Ovary (tissue), 10 donors: ENCODE measurements at regions of chr12 and their contacts with region 1.

Region 1: DNA sequence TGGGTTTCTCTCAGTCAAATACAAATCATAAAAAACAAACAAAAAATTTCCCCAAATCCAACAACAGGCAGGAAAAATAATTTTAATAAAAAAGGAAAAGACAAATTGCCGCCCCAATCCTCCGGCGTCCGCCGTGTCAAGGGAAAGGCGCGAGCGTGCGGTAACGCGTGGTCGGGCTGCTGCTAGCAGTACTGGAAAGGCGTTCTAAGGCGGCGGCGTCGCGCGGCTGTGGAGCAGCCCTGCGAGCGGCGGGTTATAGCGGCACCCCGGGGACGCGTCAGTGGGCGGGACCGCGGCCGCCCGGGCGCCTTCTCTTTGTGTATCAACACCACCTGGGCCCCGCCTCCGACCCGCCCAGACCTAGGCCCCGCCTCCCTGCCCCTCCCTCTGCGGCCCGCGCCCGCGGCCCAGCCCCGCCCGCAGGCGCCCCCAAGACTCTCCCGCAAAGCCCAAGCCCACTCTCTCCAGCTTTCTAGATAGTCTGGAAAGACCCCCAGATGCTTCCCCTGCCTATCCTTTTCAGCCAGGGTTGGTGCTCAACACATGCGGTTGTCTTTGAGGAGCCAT is at the start of gene SLC38A2:
- DNase-seq: peak; percentile 98 to 99 (median 99)
- H3K4me3 ChIP-seq: peak within 1 kb of the TSS; percentile 99
- H3K27ac ChIP-seq: peak within 1 kb of the TSS; percentile 95 to 96
- H3K4me1 ChIP-seq: peaks cover 6% of the 10 kb centered on the region
- H3K27me3 ChIP-seq: no peaks in the 10 kb centered on the region
- CTCF ChIP-seq: no peak
- EP300 ChIP-seq: no peak
- POLR2A ChIP-seq: peak; percentile 98
- total RNA-seq, gene SLC38A2: 124 to 390 (median 248) TPM

Region 2: GRCh38 chr12:45990468-45991283 is 382.0 kb before region 1 on chr12 and contains the start of gene SCAF11:
- intact Hi-C with region 1: loop called in 1 of 4 experiments (anchors 10 kb)
- DNase-seq: peak; percentile 100
- H3K4me3 ChIP-seq: peak within 1 kb of the TSS; percentile 82
- H3K27ac ChIP-seq: peak within 1 kb of the TSS; percentile 91 to 97
- H3K4me1 ChIP-seq: peaks cover 7% of the 10 kb centered on the region
- H3K27me3 ChIP-seq: no peaks in the 10 kb centered on the region
- CTCF ChIP-seq: peak; percentile 93 to 99 (median 99)
- EP300 ChIP-seq: no peak
- POLR2A ChIP-seq: peak; percentile 90
- total RNA-seq, gene SCAF11: 91.8 to 149 (median 97.7) TPM

Region 3: GRCh38 chr12:46153268-46153872 is 219.3 kb before region 1 on chr12:
- intact Hi-C with region 1: loop called in 1 of 4 experiments (anchors 10 kb)
- DNase-seq: no peak
- H3K4me3 ChIP-seq: no peak overlapping the region
- H3K27ac ChIP-seq: no peak overlapping the region
- H3K4me1 ChIP-seq: peaks cover 1% of the 10 kb centered on the region
- H3K27me3 ChIP-seq: no peaks in the 10 kb centered on the region
- CTCF ChIP-seq: peak; percentile 21 to 44 (median 30)
- EP300 ChIP-seq: no peak
- POLR2A ChIP-seq: no peak

Region 4: GRCh38 chr12:46268590-46269558 is 103.8 kb before region 1 on chr12 and contains the start of gene SLC38A1:
- intact Hi-C with region 1: loop called in 2 of 4 experiments (anchors 5 to 10 kb)
- DNase-seq: peak; percentile 71 to 79 (median 74)
- H3K4me3 ChIP-seq: peak within 1 kb of the TSS; percentile 60
- H3K27ac ChIP-seq: peak within 1 kb of the TSS; percentile 53 to 66
- H3K4me1 ChIP-seq: no peaks in the 10 kb centered on the region
- H3K27me3 ChIP-seq: no peaks in the 10 kb centered on the region
- CTCF ChIP-seq: no peak
- EP300 ChIP-seq: no peak
- POLR2A ChIP-seq: peak; percentile 63
- total RNA-seq, gene SLC38A1: 21.9 to 86.3 (median 28.6) TPM

Region 5: DNA sequence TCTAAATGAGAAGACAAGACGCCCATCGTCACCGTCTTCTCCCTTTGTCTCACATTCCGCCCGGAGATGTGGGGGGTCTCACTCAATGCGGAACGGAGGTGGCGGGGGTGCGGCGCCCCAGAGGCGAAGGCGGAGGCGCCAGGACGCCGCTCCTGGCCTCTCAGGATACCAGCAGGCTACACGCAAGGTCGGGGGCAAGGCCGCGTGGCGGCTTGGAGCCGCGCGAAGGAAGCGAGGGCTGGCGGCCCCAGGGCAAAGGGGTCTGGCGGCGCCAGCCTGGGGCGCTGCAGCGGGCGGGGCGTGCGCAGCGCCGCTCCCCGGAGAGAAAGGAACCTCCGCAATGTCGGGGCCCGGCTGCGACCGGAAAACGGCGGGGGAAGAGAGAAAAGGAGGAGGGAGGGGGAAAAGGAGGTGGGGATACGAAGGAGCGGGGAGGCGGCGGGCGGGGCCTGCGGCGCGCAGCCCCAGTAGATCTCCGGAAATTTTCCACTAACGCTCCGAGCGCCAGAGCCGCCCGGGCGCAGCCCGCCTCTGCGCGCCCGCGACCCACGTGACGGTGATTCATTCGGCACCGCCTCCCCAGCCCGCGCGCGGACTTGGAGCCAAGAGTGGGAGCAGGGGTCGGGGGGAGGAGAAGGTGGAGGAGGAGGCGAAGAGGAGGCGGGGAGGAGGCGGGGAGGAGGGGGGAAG is 10.5 kb after region 1 on chr12:
- intact Hi-C with region 1: loop called in 1 of 4 experiments (anchors 1 kb)
- DNase-seq: peak; percentile 99
- H3K4me3 ChIP-seq: peak overlapping the region; percentile 81
- H3K27ac ChIP-seq: peak overlapping the region; percentile 93 to 100
- H3K4me1 ChIP-seq: peaks cover 10% of the 10 kb centered on the region
- H3K27me3 ChIP-seq: no peaks in the 10 kb centered on the region
- CTCF ChIP-seq: peak in 1 of 3 donors; percentile 35
- EP300 ChIP-seq: peak; percentile 78
- POLR2A ChIP-seq: peak; percentile 93

Region 6: DNA sequence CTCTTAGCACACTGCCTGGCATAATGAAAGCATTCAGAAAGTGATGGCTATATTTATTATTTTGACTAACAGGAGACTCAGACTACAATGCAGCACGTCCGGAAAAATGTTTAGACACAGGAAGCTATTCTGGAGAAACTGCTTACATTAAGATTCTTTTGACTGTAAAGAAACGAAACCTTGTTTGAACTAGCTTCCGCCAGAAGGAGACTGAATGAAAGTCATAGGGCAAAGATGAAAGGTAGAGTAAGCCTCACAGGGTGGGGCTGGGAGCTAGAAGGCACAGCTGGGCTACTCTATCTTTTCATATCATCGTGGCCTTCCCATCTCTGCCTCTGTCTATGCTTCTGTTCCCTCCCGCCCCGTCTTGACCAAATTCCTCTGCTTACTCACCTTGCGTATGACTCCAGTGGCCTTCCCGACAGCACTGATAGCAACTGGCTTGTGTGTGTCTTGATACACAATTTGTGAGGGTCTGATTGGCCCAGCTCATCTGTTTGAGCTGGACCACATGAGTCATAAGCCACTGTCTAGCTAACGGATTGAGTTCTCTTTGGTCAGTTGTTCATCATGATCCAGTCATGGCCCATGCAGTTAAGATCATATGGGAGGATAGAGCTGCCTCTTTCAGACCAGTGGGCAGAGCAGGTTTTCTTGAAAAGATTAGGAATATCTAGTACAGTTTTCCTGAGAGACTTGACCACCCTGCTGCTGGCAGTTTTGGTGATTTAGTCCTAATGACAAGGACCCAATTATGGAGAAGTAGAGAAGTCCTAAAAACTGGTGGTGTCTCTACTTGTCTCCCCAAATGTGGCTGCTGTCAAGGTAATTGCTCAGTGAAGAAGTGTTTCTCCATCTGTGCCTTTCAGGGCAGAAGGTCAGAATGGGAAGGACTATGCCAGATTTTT is 151.5 kb after region 1 on chr12:
- intact Hi-C with region 1: loop called in 1 of 4 experiments (anchors 5 kb)
- DNase-seq: peak in 1 of 5 donors; percentile 17
- H3K4me3 ChIP-seq: no peak overlapping the region
- H3K27ac ChIP-seq: peak overlapping the region; percentile 27 to 60
- H3K4me1 ChIP-seq: peaks cover 35% of the 10 kb centered on the region
- H3K27me3 ChIP-seq: no peaks in the 10 kb centered on the region
- CTCF ChIP-seq: no peak
- EP300 ChIP-seq: no peak
- POLR2A ChIP-seq: no peak